Activated CD8-positive, alpha-beta T cell treated with anti-CD3 and anti-CD28 coated beads, Interleukin-2, amount 10 ng/mL, durations not matched to agents 7 days and 5 days (primary cell): ENCODE measurements at regions of chr5 and their contacts with region 1.

Region 1: GRCh38 chr5:72816311-72817145 is at the start of gene TNPO1:
- DNase-seq: peak; percentile 84
- ATAC-seq: peak; percentile 87
- H3K4me3 Mint-ChIP-seq: peak within 1 kb of the TSS; percentile 80
- H3K27ac Mint-ChIP-seq: peak within 1 kb of the TSS; percentile 76
- H3K4me1 Mint-ChIP-seq: peaks cover 24% of the 10 kb centered on the region
- H3K27me3 Mint-ChIP-seq: peaks cover 15% of the 10 kb centered on the region
- total RNA-seq, gene TNPO1: 75.9 to 90.2 TPM

Region 2: DNA sequence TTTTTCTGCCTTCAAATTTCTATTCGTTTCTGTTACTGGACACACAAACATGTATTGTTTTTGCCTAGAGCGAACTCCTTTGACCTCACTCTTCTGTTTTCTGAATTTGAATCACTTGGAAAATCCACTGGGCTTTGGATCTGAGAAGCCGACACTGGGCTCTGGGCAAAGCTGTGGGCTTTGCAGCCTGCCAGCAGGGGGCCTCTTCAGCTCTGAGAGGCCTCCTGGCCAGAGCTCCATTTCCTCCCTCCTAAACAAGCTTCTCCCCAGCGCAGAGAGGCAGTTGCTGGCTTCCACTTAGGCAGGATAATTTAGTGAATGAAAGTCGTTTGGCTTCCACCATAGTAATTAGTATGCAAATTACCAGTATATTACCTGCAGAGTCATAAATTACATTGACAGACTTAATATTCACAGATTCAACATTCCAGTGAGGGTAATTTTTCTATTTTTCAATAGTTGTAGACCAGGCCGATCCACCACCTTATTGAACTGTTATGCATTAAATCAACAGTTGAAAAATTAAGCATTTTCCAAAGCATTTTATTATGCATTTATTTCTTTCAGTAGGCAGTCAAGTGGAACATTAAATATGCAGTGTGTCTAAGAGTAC is 205.3 kb before region 1 on chr5:
- CTCF ChIA-PET with region 1: interaction called, 68 read pairs
- POLR2A ChIA-PET with region 1: no interaction called
- DNase-seq: peak; percentile 51
- ATAC-seq: peak; percentile 79
- H3K4me3 Mint-ChIP-seq: no peak overlapping the region
- H3K27ac Mint-ChIP-seq: no peak overlapping the region
- H3K4me1 Mint-ChIP-seq: no peaks in the 10 kb centered on the region
- H3K27me3 Mint-ChIP-seq: peaks cover 4% of the 10 kb centered on the region

Region 3: DNA sequence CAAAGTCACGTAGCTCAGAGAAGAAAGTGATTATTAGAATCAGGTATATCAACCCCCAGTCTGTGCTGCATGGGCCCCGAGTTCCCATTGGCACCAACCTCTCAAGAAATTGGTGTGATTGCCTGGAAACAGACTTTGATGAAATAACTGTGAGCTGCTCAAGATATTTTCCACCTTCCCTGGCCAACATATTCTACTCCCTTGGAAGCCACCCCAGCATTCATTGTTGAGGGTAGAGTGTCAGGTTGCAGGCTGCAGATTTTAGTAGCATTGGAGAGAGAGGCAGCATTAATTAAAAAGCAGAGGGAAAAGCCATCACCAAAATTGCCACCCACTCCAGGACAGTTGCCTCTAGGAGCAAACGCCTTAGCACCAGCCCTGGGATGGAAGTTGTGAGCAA is 154.2 kb before region 1 on chr5:
- CTCF ChIA-PET with region 1: no interaction called
- POLR2A ChIA-PET with region 1: no interaction called
- DNase-seq: no peak
- ATAC-seq: no peak
- H3K4me3 Mint-ChIP-seq: no peak overlapping the region
- H3K27ac Mint-ChIP-seq: no peak overlapping the region
- H3K4me1 Mint-ChIP-seq: no peaks in the 10 kb centered on the region
- H3K27me3 Mint-ChIP-seq: peaks cover 4% of the 10 kb centered on the region

Region 4: GRCh38 chr5:72829707-72830106 is 13.2 kb after region 1 on chr5:
- CTCF ChIA-PET with region 1: interaction called, 25 read pairs
- POLR2A ChIA-PET with region 1: interaction called, 3 read pairs
- DNase-seq: no peak
- ATAC-seq: no peak
- H3K4me3 Mint-ChIP-seq: no peak overlapping the region
- H3K27ac Mint-ChIP-seq: no peak overlapping the region
- H3K4me1 Mint-ChIP-seq: no peaks in the 10 kb centered on the region
- H3K27me3 Mint-ChIP-seq: peaks cover 3% of the 10 kb centered on the region

Region 5: GRCh38 chr5:72834924-72835323 is 18.4 kb after region 1 on chr5:
- CTCF ChIA-PET with region 1: interaction called, 25 read pairs
- POLR2A ChIA-PET with region 1: no interaction called
- DNase-seq: no peak
- ATAC-seq: no peak
- H3K4me3 Mint-ChIP-seq: no peak overlapping the region
- H3K27ac Mint-ChIP-seq: no peak overlapping the region
- H3K4me1 Mint-ChIP-seq: no peaks in the 10 kb centered on the region
- H3K27me3 Mint-ChIP-seq: peaks cover 8% of the 10 kb centered on the region

Region 6: DNA sequence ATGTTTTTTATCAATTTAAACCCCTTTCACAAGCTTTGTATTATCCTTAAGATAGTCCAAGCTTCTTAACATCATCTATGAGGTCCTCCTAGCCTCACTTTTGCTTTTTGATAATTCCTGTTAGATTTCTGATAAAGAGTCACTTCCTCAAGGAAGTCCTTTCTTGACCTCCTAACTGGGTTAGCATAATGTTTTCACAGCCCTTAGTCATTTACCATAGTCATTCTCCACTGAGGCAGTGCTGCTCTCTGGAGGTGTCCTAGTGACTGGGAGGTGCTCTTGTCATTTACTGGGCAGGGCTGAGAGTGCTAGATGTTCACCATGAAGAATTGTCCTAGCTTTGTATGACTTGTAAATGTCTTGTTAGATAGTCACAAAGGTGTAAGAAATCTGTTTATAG is 26.3 kb after region 1 on chr5:
- CTCF ChIA-PET with region 1: interaction called, 25 read pairs
- POLR2A ChIA-PET with region 1: interaction called, 20 read pairs
- DNase-seq: no peak
- ATAC-seq: no peak
- H3K4me3 Mint-ChIP-seq: no peak overlapping the region
- H3K27ac Mint-ChIP-seq: no peak overlapping the region
- H3K4me1 Mint-ChIP-seq: peaks cover 10% of the 10 kb centered on the region
- H3K27me3 Mint-ChIP-seq: peaks cover 7% of the 10 kb centered on the region

Region 7: GRCh38 chr5:72847989-72848473 is 31.5 kb after region 1 on chr5:
- CTCF ChIA-PET with region 1: interaction called, 25 read pairs
- POLR2A ChIA-PET with region 1: interaction called, 20 read pairs
- DNase-seq: peak; percentile 89
- ATAC-seq: peak; percentile 84
- H3K4me3 Mint-ChIP-seq: peak overlapping the region; percentile 98
- H3K27ac Mint-ChIP-seq: peak overlapping the region; percentile 99
- H3K4me1 Mint-ChIP-seq: peaks cover 37% of the 10 kb centered on the region
- H3K27me3 Mint-ChIP-seq: peaks cover 2% of the 10 kb centered on the region